Ovary (tissue), 10 donors: ENCODE measurements at regions of chr1 and their contacts with region 1.

Region 1: GRCh38 chr1:200288226-200288625 is 121.6 kb downstream of the ZNF281 start:
- DNase-seq: no peak
- H3K4me3 ChIP-seq: no peak overlapping the region
- H3K27ac ChIP-seq: no peak overlapping the region
- H3K4me1 ChIP-seq: no peaks in the 10 kb centered on the region
- H3K27me3 ChIP-seq: no peaks in the 10 kb centered on the region
- CTCF ChIP-seq: no peak
- EP300 ChIP-seq: no peak
- POLR2A ChIP-seq: no peak

Region 2: DNA sequence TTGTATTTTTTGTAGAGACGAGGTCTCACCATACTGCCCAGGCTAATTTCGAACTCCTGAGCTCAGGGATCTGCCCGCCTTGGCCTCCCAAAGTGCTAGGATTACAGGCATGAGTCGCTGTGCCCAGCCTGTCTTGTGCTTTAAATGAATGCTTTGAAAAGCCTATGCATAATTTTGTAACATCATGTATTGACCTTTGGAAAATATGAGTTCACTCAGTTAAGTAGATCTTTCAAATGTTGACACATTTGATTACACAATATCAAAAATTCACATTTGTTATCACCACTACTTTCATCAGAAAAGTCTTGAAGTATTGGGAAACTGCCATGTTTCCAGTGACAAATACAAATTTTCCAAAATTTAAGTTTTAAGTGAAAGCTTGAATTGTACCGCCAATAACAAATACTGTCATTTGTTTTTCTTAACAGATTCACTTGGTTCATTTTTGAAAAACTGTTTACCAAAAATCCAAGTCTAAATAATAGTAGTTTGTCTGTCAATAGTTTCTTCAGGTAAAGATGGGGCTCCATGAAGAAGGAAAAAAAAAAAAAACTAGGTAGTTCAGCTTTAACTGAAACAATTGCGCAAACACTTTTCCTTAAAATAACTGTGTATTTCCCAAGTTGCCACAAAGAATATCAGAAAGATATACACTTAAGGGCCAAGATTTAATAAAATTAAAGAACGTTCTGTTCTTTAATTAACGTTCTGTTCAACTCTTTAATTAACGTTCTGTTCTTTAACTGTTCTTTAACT is 493.9 kb before region 1 on chr1:
- intact Hi-C with region 1: loop called in 1 of 4 experiments (anchors 5 kb)
- DNase-seq: no peak
- H3K4me3 ChIP-seq: no peak overlapping the region
- H3K27ac ChIP-seq: no peak overlapping the region
- H3K4me1 ChIP-seq: no peaks in the 10 kb centered on the region
- H3K27me3 ChIP-seq: no peaks in the 10 kb centered on the region
- CTCF ChIP-seq: no peak
- EP300 ChIP-seq: no peak
- POLR2A ChIP-seq: no peak

Region 3: DNA sequence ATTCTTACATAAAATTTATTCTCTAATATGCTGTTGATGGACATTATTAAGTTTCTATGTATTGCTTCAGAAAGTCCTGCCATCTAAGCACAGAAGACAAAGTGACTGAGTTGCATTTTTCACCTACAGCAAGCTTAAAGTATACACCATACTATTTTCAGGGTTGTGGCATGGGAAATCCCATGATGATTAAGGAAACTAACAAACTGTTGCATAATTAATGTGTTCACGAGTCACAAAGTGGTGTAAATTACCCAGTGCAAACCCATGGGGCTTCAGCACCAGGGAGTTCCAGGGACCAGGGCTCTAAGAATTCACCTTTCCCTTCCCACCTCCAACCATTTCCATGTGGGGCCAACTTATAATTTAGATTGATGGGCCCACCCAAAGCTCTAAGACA is 342.6 kb before region 1 on chr1:
- intact Hi-C with region 1: no loop called
- DNase-seq: no peak
- H3K4me3 ChIP-seq: no peak overlapping the region
- H3K27ac ChIP-seq: no peak overlapping the region
- H3K4me1 ChIP-seq: no peaks in the 10 kb centered on the region
- H3K27me3 ChIP-seq: no peaks in the 10 kb centered on the region
- CTCF ChIP-seq: no peak
- EP300 ChIP-seq: no peak
- POLR2A ChIP-seq: no peak